Common myeloid progenitor, CD34-positive (primary cell): ENCODE measurements at regions of chr20 and their contacts with region 1.

Region 1: DNA sequence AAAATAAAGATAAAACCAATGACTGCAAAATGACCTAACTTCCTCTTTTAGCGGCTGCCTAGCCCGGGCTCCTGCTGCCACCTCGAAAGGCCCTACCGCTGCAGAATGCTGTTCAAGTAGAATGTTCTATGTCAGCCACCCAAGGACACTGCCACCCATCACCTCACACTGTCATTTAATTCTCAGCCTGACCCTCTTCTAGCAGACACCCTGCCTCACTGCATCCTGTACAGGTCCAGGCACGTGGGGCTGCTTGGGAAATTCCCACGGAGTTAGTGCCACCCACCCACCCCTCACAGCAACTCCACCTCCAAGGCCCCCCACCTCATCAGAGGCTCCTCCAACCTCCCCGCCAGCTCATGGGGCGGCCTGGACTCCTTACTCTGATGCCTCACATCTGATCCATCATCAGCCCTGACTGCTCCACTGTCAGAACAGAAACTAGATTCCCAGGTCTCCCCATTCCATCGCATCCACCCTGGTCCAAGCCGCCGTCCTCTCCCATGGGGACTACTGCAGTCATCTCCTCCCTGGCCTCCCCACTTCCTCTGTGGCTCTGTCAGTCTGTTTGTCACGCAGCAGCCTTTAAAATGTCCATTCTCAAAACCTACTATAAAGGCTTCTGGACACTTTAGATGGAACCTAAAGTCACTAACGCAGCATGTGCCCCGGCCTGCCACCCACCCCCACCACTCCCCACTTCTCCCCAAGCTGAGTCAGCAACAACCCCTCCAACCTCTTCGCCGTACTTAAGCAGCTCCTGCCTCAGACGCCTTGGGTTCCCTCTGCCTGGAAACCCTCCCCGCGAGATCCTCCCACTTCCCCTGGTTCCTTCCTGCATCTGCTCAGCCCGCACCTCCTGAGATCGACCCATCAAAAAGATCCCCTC is 17.0 kb downstream of the NFATC2 start:
- DNase-seq: peak; percentile 76 to 93 (median 92)
- H3K4me3 ChIP-seq: peak overlapping the region in 4 of 7 experiments; percentile 0 to 69 (median 30)
- H3K27ac ChIP-seq: peak overlapping the region; percentile 25 to 69
- H3K4me1 ChIP-seq: peaks cover 0 to 60% (median 59%) of the 10 kb centered on the region in 4 experiments
- H3K27me3 ChIP-seq: no peaks in the 10 kb centered on the region

Region 2: GRCh38 chr20:51512645-51513044 is 12.8 kb before region 1 on chr20:
- CTCF ChIA-PET with region 1: interaction called, 13 read pairs
- POLR2A ChIA-PET with region 1: interaction called, 4 read pairs
- DNase-seq: no peak
- H3K4me3 ChIP-seq: no peak overlapping the region
- H3K27ac ChIP-seq: peak overlapping the region in 1 of 2 experiments; percentile 26
- H3K4me1 ChIP-seq: peaks cover 2 to 19% (median 10%) of the 10 kb centered on the region in 4 experiments
- H3K27me3 ChIP-seq: no peaks in the 10 kb centered on the region

Region 3: GRCh38 chr20:51667002-51667408 is 141.5 kb after region 1 on chr20:
- CTCF ChIA-PET with region 1: no interaction called
- POLR2A ChIA-PET with region 1: no interaction called
- DNase-seq: peak in 2 of 3 donors; percentile 64 to 70
- H3K4me3 ChIP-seq: peak overlapping the region in 2 of 7 experiments; percentile 20 to 28
- H3K27ac ChIP-seq: no peak overlapping the region
- H3K4me1 ChIP-seq: peaks cover 0 to 21% (median 13%) of the 10 kb centered on the region in 4 experiments
- H3K27me3 ChIP-seq: no peaks in the 10 kb centered on the region